HEK293T (cell line): ENCODE measurements at regions of chr12 and their contacts with region 1.

Region 1: GRCh38 chr12:71663561-71664294 is at the start of gene ZFC3H1:
- DNase-seq: peak; percentile 92

Region 2: GRCh38 chr12:71312768-71313403 is 350.8 kb before region 1 on chr12:
- CTCF ChIA-PET with region 1: no interaction called
- POLR2A ChIA-PET with region 1: no interaction called
- DNase-seq: no peak

Region 3: GRCh38 chr12:71719615-71720370 is 56.1 kb after region 1 on chr12:
- CTCF ChIA-PET with region 1: interaction called, 12 read pairs
- POLR2A ChIA-PET with region 1: interaction called, 3 read pairs
- DNase-seq: no peak

Region 4: DNA sequence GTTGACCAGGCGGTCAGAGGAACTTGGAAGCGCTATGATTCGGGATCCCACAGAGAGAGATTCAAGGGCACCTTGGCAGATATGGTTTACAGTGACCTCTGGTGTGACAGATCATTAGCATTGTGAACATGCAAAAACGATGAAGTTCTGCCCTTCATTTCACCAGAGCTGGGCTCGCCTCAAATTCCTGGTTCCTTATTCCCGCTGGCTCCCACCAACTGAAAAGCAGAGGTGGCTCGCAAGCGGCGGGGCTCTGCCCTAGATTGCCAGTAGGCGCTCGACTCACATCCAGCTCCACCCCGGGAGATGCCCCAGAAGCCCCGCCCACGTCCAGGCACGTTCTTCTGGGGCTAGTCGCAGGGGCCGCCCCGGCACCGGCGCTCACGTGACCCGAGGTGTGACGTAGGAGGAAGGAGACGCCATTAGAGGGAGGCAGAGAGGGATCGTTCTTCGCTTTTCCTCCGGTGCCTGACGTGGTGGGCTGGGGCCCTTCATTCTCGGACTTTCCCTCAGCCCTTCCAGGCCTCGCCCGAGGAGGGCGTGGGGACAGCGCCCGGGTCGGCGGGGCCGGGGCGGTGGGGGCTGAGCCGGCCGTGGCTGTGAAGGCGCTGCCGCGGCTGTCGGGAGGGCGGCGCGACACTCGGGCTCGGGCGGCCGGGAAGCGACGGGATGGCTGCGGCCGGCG is 90.9 kb after region 1 on chr12 and contains the start of gene RAB21:
- CTCF ChIA-PET with region 1: no interaction called
- POLR2A ChIA-PET with region 1: interaction called, 12 read pairs
- DNase-seq: peak; percentile 98